Esophagus muscularis mucosa (tissue), 4 donors: ENCODE measurements at regions of chr9 and their contacts with region 1.

Region 1: DNA sequence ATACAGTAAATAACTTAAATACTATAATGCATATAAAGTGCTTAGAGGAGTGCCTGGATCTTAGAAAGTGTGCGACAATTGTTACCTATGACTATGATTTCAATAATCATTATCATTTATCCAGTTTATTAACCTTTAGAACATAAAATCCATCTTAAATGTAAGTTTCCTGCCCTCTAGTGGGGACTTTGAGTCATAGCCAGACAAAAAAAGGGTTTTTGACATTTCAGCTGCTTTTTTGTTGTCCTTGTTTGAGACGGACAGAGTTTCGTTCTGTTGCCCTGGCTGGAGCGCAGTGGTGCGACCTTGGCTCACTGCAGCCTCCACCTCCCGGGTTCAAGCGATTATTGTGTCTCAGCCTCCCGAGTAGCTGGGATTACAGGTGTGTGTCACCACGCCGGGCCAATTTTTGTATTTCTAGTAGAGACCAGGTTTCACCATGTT is 9.7 kb upstream of the C9orf152 start:
- DNase-seq: no peak
- H3K4me3 ChIP-seq: peak overlapping the region in 1 of 4 donors; percentile 14
- H3K27ac ChIP-seq: no peak overlapping the region
- H3K4me1 ChIP-seq: peaks cover 0 to 4% (median 0%) of the 10 kb centered on the region in 4 donors
- H3K27me3 ChIP-seq: no peaks in the 10 kb centered on the region
- CTCF ChIP-seq: peak; percentile 74 to 79 (median 78)
- EP300 ChIP-seq: no peak
- POLR2A ChIP-seq: no peak

Region 2: DNA sequence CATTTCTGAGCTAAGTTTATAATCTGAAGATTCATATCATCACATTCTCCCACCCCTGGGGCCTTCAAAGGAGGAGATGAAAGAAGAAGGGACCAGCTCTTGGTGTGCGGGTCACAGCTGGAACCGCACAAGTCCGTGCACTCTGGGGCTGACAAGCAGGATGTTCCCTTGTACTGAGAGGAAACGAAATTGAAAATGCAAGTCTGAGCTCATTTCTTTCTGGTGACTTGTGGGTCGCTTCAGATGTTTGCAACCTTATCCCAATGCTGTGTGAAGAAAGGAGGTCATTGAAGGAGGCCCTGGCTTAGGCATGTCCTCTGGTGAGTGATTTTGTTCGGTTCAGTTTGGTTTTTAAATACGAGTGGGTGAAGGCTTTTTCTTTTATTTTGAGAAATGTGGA is 69.3 kb before region 1 on chr9:
- intact Hi-C with region 1: no loop called
- DNase-seq: no peak
- H3K4me3 ChIP-seq: peak overlapping the region in 1 of 4 donors; percentile 17
- H3K27ac ChIP-seq: peak overlapping the region; percentile 35 to 63 (median 48)
- H3K4me1 ChIP-seq: peaks cover 62 to 71% (median 64%) of the 10 kb centered on the region in 4 donors
- H3K27me3 ChIP-seq: no peaks in the 10 kb centered on the region
- CTCF ChIP-seq: no peak
- EP300 ChIP-seq: no peak
- POLR2A ChIP-seq: no peak

Region 3: GRCh38 chr9:110183208-110184145 is 34.2 kb before region 1 on chr9:
- intact Hi-C with region 1: loop called (anchors 1 kb)
- DNase-seq: no peak
- H3K4me3 ChIP-seq: no peak overlapping the region
- H3K27ac ChIP-seq: no peak overlapping the region
- H3K4me1 ChIP-seq: peaks cover 4 to 19% (median 10%) of the 10 kb centered on the region in 4 donors
- H3K27me3 ChIP-seq: no peaks in the 10 kb centered on the region
- CTCF ChIP-seq: peak; percentile 59 to 70 (median 64)
- EP300 ChIP-seq: no peak
- POLR2A ChIP-seq: no peak

Region 4: GRCh38 chr9:110543631-110544051 is 326.0 kb after region 1 on chr9:
- intact Hi-C with region 1: no loop called
- DNase-seq: no peak
- H3K4me3 ChIP-seq: no peak overlapping the region
- H3K27ac ChIP-seq: peak overlapping the region in 2 of 4 donors; percentile 3
- H3K4me1 ChIP-seq: peaks cover 0 to 64% (median 36%) of the 10 kb centered on the region in 4 donors
- H3K27me3 ChIP-seq: no peaks in the 10 kb centered on the region
- CTCF ChIP-seq: no peak
- EP300 ChIP-seq: no peak
- POLR2A ChIP-seq: no peak